Activated T-helper 2 cell treated with anti-CD3 and anti-CD28 coated beads, Interferon-gamma antibody, Interleukin-2, Interleukin-4, amounts not matched to agents 10 μg/mL and 5 μg/mL and 100 μg/mL, durations not matched to agents 14 hours and 24 hours and 36 hours (primary cell): ENCODE measurements at regions of chr12 and their contacts with region 1.

Region 1: DNA sequence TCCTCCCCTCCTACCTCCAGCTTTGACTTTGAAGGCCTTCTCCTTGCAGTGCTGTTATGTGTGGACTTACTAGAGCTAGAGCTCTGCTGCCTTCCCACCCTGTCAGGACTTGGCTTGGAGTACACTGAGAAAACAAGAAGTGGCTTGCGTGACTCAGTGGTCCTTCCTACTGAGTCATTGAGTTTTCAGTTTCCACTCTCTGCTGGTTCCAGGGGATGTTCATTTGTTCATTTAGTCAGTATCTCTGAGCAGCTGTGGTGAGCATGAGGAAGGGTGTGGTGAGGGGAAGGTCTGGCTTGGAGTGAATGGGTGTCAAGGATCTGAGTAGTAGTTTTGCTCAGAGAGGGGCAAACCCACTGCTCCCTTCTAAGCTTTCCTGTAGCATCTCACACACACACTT is 17.2 kb upstream of the ELK3 start:
- DNase-seq: peak; percentile 60
- H3K4me3 Mint-ChIP-seq: peak overlapping the region; percentile 11
- H3K27ac Mint-ChIP-seq: peak overlapping the region; percentile 53
- H3K4me1 Mint-ChIP-seq: peaks cover 18% of the 10 kb centered on the region
- H3K27me3 Mint-ChIP-seq: no peaks in the 10 kb centered on the region

Region 2: GRCh38 chr12:95412482-95413311 is 764.3 kb before region 1 on chr12:
- intact Hi-C with region 1: no loop called
- DNase-seq: no peak
- H3K4me3 Mint-ChIP-seq: no peak overlapping the region
- H3K27ac Mint-ChIP-seq: no peak overlapping the region
- H3K4me1 Mint-ChIP-seq: no peaks in the 10 kb centered on the region
- H3K27me3 Mint-ChIP-seq: no peaks in the 10 kb centered on the region

Region 3: DNA sequence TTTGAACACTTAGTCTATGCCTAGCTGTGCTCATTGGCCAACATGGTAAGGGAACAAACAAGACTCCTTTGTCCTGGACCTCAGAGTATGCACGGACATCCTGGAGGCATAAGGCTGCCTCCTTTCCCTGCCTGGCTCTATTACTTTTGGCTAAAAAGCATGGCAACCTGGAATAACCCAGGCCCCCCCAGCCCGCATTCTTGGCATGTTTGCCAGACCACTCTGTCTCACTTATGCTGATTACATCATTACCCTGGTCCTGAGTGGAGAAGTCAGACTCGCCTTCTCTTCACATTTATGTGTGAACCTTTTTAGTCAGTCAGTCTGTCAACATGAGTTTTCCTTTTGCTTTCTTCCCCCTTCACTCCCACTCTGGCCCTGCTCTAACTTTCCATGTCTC is 40.9 kb before region 1 on chr12:
- intact Hi-C with region 1: loop called (anchors 5 kb)
- DNase-seq: no peak
- H3K4me3 Mint-ChIP-seq: no peak overlapping the region
- H3K27ac Mint-ChIP-seq: no peak overlapping the region
- H3K4me1 Mint-ChIP-seq: peaks cover 23% of the 10 kb centered on the region
- H3K27me3 Mint-ChIP-seq: peaks cover 4% of the 10 kb centered on the region

Region 4: DNA sequence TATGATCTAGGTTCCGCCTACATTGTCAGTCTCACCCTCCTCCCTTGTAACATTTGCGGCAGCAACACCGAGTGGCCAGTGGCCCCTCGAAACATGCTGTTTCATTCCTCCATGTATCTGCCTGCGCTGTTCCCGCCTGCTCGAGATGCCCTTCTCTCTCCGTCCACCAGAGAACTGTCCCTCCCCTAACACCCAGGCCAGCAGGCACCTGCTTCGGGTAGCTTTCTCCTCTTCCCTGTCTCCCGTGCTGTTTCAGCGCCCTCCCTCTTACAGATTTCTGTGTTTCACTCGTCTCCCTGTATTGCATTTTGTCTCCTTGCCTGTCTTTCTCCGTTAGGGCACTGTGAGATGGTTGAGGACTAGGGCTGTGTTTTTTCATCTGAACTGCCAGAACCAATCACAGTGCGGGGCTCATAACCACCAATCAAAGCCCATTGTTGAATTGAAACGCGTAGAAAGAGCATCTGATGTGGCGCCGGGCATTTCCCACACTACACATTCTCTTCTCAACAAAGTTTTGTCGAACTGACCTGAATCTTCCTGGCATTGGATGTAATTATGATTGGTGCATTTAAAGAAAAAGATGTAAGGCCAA is 23.8 kb before region 1 on chr12:
- intact Hi-C with region 1: no loop called
- DNase-seq: no peak
- H3K4me3 Mint-ChIP-seq: no peak overlapping the region
- H3K27ac Mint-ChIP-seq: no peak overlapping the region
- H3K4me1 Mint-ChIP-seq: no peaks in the 10 kb centered on the region
- H3K27me3 Mint-ChIP-seq: no peaks in the 10 kb centered on the region

Region 5: DNA sequence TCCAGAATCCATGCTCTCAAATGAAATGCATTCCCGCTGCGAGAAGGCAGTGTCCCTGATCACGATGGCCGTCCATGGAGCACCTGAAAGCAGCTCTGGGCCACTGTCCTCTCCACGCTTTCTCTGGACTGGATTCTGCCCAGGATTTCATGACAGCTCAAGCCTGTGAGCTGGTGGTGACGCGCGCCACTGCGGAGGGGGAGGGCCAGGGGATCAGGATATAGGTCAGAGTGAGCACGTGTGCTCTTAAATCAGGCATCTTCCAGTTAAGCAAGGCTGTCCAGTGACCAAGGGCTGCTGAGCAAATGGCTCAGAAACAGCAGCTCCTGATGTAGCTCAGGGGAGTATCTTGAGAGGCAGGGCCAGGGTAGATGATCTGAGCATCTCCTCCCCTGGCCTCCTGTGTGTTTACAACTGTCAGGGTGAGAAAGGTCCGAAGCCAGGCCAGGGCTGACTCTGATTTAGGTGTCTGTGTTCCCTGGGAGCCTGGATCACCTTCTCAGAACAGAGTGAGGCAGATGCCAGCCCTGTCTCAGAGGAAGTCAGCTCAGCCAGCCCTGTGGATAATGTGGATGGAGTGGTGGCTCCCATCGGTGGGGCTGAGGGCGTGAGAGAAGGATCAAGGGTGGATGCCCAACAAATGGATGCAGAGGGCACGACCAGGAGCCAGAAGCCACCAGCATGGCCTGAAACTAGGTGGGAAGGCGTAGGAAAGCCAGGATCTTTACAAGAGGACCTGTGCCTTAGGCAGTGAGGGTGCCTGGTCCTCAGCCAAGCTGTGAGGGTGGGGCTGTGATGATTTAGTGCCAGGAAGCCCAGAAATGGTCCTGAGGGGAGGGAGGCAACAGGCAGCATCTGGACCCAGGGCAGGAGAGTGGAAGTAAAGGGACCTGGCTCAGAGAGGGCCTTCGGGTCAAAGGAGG is 72.4 kb after region 1 on chr12:
- intact Hi-C with region 1: no loop called
- DNase-seq: no peak
- H3K4me3 Mint-ChIP-seq: no peak overlapping the region
- H3K27ac Mint-ChIP-seq: no peak overlapping the region
- H3K4me1 Mint-ChIP-seq: peaks cover 20% of the 10 kb centered on the region
- H3K27me3 Mint-ChIP-seq: no peaks in the 10 kb centered on the region

Region 6: GRCh38 chr12:96635834-96636233 is 458.8 kb after region 1 on chr12:
- intact Hi-C with region 1: no loop called
- DNase-seq: no peak
- H3K4me3 Mint-ChIP-seq: no peak overlapping the region
- H3K27ac Mint-ChIP-seq: no peak overlapping the region
- H3K4me1 Mint-ChIP-seq: no peaks in the 10 kb centered on the region
- H3K27me3 Mint-ChIP-seq: no peaks in the 10 kb centered on the region